HCT116 (cell line): ENCODE measurements at regions of chr9 and their contacts with region 1.

Region 1: GRCh38 chr9:6827439-6827838 is 69.7 kb downstream of the KDM4C start:
- DNase-seq: peak; percentile 15
- ATAC-seq: peak; percentile 74
- H3K4me3 ChIP-seq: no peak overlapping the region
- H3K27ac ChIP-seq: no peak overlapping the region
- H3K4me1 ChIP-seq: no peaks in the 10 kb centered on the region
- H3K27me3 ChIP-seq: no peaks in the 10 kb centered on the region
- CTCF ChIP-seq: peak; percentile 29 to 74 (median 53); a peak in 5 of 6 replicates
- POLR2A ChIP-seq: no peak
- RAD21 ChIP-seq: peak; percentile 63

Region 2: DNA sequence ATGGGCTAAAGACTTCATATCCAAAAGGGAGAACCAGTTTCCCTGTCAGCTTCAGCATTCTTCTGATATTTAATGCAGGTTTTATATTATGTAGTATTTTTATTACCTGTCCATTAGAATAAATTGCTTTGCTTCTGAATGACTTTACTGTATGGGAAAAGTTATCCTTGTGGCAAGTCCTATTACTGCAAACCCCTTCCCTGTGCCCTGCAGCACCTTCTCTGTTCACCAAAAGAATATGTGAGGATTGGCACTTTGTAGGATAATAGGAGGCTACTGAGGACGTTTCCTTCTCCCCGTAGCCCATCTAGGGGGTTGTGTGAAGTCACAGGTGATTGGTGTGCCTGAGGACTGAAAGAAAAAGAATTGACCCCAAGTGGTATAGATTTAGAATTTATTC is 226.5 kb after region 1 on chr9:
- CTCF ChIA-PET with region 1: no interaction called
- POLR2A ChIA-PET with region 1: no interaction called
- RAD21 ChIA-PET with region 1: no interaction called
- intact Hi-C with region 1: loop called (anchors 5 kb)
- DNase-seq: no peak
- ATAC-seq: no peak
- H3K4me3 ChIP-seq: no peak overlapping the region
- H3K27ac ChIP-seq: no peak overlapping the region
- H3K4me1 ChIP-seq: no peaks in the 10 kb centered on the region
- H3K27me3 ChIP-seq: no peaks in the 10 kb centered on the region
- CTCF ChIP-seq: no peak
- POLR2A ChIP-seq: no peak
- RAD21 ChIP-seq: no peak

Region 3: DNA sequence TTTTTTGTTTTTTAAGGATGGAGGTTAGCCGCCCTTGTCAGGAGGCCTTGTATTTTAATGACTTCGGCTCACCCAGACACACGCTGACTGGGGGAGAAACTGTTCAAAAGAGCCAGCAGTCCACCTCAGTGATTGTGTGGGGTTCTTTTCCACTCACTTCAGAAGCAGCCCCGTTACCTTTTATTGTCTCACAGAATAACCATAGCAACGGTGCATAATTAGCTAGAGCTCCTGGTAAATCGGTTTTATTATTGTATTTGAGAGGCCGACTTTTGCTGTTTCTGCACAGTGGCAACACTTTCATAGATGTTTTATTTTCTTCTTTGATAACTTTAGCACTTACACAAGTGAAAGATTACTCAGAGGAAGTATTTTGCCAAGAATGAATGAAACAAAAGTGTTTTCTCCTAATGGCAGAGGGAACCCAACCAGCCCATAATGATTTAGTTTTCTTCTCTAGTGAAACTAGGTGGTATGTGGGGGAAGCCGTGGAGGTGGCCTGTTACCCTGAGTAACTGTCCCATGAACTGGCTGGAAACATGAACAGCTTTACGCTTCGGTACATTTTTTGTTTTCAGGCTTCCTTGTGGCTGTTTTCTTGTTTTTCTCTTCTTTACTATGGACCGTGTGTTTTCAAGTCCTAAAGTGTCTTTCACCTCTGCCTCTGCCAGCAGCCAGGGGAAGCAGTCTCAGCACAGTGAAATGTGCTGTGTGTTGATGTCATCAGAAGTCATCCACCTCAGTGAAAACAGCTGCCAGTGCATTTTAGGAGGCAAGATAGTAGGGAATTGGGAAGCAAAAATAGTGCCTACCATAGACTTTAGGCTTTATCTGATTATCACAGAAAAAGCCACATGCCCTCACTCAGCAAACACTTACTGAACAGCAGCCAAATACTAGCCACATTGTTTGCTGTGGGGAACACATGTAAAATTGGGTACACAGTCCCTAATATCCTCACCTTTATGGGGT is 345.0 kb after region 1 on chr9:
- CTCF ChIA-PET with region 1: no interaction called
- POLR2A ChIA-PET with region 1: no interaction called
- RAD21 ChIA-PET with region 1: no interaction called
- intact Hi-C with region 1: loop called (anchors 10 kb)
- DNase-seq: no peak
- ATAC-seq: no peak
- H3K4me3 ChIP-seq: no peak overlapping the region
- H3K27ac ChIP-seq: no peak overlapping the region
- H3K4me1 ChIP-seq: no peaks in the 10 kb centered on the region
- H3K27me3 ChIP-seq: no peaks in the 10 kb centered on the region
- CTCF ChIP-seq: no peak
- POLR2A ChIP-seq: no peak
- RAD21 ChIP-seq: no peak

Region 4: GRCh38 chr9:7536310-7536939 is 709.0 kb after region 1 on chr9:
- CTCF ChIA-PET with region 1: no interaction called
- POLR2A ChIA-PET with region 1: no interaction called
- RAD21 ChIA-PET with region 1: no interaction called
- intact Hi-C with region 1: loop called (anchors 1 kb)
- DNase-seq: peak; percentile 18
- ATAC-seq: peak; percentile 94
- H3K4me3 ChIP-seq: no peak overlapping the region
- H3K27ac ChIP-seq: no peak overlapping the region
- H3K4me1 ChIP-seq: no peaks in the 10 kb centered on the region
- H3K27me3 ChIP-seq: peaks cover 4% of the 10 kb centered on the region; the same call in 1 of the 2 replicates
- CTCF ChIP-seq: peak; percentile 30 to 77 (median 76); a peak in 5 of 6 replicates
- POLR2A ChIP-seq: no peak
- RAD21 ChIP-seq: peak; percentile 55; the same call in 1 of the 2 replicates

Region 5: GRCh38 chr9:7656636-7657035 is 829.2 kb after region 1 on chr9:
- CTCF ChIA-PET with region 1: no interaction called
- POLR2A ChIA-PET with region 1: no interaction called
- RAD21 ChIA-PET with region 1: no interaction called
- intact Hi-C with region 1: loop called (anchors 5 kb)
- DNase-seq: no peak
- ATAC-seq: 0 out of 2 replicates have a peak, but pooled peaks have one; percentile 42
- H3K4me3 ChIP-seq: no peak overlapping the region
- H3K27ac ChIP-seq: no peak overlapping the region
- H3K4me1 ChIP-seq: no peaks in the 10 kb centered on the region
- H3K27me3 ChIP-seq: no peaks in the 10 kb centered on the region
- CTCF ChIP-seq: no peak
- POLR2A ChIP-seq: no peak
- RAD21 ChIP-seq: no peak